ENCODE measurements at regions of chr6 and their contacts with region 1.

Region 1: DNA sequence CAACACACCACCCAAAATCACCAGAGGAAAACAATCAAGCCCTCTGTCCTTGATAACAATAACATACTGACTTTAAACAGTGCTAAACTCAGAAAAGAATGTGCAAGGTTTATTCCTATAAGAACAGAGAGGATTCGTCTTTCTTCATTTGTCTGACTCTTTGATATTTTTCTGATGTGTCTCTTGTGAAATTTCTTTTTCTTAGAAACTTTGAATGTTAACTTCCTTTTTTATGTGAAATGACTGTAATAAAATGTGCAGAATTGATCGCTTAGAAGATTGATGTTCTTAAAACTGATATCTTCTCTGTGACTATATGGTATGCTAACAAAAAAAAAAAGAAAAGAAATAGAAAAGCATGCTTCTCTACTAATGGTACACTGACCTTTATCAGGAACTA is 947.4 kb upstream of the CITED2 start:
- DNase-seq: no peak
- H3K4me3 ChIP-seq: no peak overlapping the region
- H3K4me3 Mint-ChIP-seq: no peak overlapping the region
- H3K27ac Mint-ChIP-seq: no peak overlapping the region
- H3K4me1 ChIP-seq: no peaks in the 10 kb centered on the region
- H3K4me1 Mint-ChIP-seq: no peaks in the 10 kb centered on the region
- H3K27me3 ChIP-seq: no peaks in the 10 kb centered on the region
- H3K27me3 Mint-ChIP-seq: no peaks in the 10 kb centered on the region
- CTCF ChIP-seq: no peak

Region 2: GRCh38 chr6:140343128-140343527 is 21.2 kb after region 1 on chr6:
- CTCF ChIA-PET with region 1: no interaction called
- POLR2A ChIA-PET with region 1: no interaction called
- intact Hi-C with region 1: loop called (anchors 1 kb)
- DNase-seq: no peak
- H3K4me3 ChIP-seq: no peak overlapping the region
- H3K4me3 Mint-ChIP-seq: no peak overlapping the region
- H3K27ac Mint-ChIP-seq: no peak overlapping the region
- H3K4me1 ChIP-seq: no peaks in the 10 kb centered on the region
- H3K4me1 Mint-ChIP-seq: no peaks in the 10 kb centered on the region
- H3K27me3 ChIP-seq: no peaks in the 10 kb centered on the region
- H3K27me3 Mint-ChIP-seq: no peaks in the 10 kb centered on the region
- CTCF ChIP-seq: no peak

Region 3: GRCh38 chr6:140494321-140495075 is 172.6 kb after region 1 on chr6:
- CTCF ChIA-PET with region 1: no interaction called
- POLR2A ChIA-PET with region 1: no interaction called
- intact Hi-C with region 1: no loop called
- DNase-seq: no peak
- H3K4me3 ChIP-seq: no peak overlapping the region
- H3K4me3 Mint-ChIP-seq: no peak overlapping the region
- H3K27ac Mint-ChIP-seq: no peak overlapping the region
- H3K4me1 ChIP-seq: no peaks in the 10 kb centered on the region
- H3K4me1 Mint-ChIP-seq: no peaks in the 10 kb centered on the region
- H3K27me3 ChIP-seq: no peaks in the 10 kb centered on the region
- H3K27me3 Mint-ChIP-seq: no peaks in the 10 kb centered on the region
- CTCF ChIP-seq: no peak

Measured in Caco-2 (cell line).